ENCODE measurements at regions of chr15 and their contacts with region 1.

Region 1: DNA sequence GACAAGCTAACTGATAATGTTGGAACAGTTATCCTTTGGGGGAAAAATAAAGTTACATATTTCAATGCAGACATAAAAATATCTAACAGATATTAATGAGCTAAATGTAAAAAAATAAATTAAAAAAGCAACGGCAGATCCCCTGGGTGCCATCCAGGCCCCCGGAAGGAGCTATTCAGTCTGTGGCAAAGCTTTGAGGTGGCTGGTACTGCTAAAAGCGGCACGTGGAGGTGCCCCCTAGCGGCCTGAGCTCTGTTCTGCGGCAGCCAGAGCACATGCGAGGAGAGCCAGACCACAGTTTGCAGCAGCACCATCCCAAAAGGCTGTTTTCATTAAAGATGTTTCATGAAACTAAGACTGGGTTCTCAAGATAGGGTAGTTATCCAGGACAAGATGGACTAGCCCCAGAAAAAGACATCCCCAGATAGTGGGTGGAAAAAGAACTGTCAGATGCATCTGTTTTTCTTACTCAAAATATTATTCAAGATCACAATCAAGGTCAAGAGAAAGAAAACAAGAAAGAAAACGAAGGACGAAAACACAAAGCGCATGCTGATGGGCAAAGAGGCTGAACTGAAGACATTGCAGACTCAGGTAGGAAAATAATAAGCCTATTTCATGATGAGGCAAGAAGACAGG is 18.7 kb downstream of the AP3S2 start:
- DNase-seq: peak; percentile 72
- H3K4me3 Mint-ChIP-seq: no peak overlapping the region
- H3K27ac Mint-ChIP-seq: peak overlapping the region; percentile 46
- H3K4me1 Mint-ChIP-seq: no peaks in the 10 kb centered on the region
- H3K27me3 Mint-ChIP-seq: no peaks in the 10 kb centered on the region
- CTCF ChIP-seq: peak; percentile 84

Region 2: DNA sequence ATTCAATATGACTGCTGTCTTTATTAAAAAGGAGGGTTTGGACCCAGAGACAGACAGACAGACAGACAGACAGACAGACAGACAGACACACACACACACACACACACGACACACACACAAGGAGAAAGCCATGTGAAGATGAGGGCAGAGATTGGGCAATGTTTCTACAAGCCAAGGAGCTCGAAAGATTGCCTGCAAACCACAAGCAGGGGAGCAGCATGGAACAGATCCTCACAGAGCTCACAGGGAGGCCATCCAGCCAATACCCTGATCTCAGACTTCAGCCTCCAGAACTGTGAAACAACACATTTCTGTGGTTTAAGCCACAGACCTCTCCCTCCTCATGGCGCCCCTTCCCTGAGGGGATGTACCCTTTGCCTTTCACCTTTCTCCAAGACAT is 822.6 kb before region 1 on chr15:
- CTCF ChIA-PET with region 1: no interaction called
- POLR2A ChIA-PET with region 1: no interaction called
- intact Hi-C with region 1: no loop called
- DNase-seq: peak; percentile 47
- H3K4me3 Mint-ChIP-seq: no peak overlapping the region
- H3K27ac Mint-ChIP-seq: no peak overlapping the region
- H3K4me1 Mint-ChIP-seq: no peaks in the 10 kb centered on the region
- H3K27me3 Mint-ChIP-seq: no peaks in the 10 kb centered on the region
- CTCF ChIP-seq: no peak

Region 3: GRCh38 chr15:89740137-89740536 is 134.9 kb before region 1 on chr15:
- CTCF ChIA-PET with region 1: interaction called, 30 read pairs
- POLR2A ChIA-PET with region 1: interaction called, 3 read pairs
- intact Hi-C with region 1: loop called (anchors 1 kb)
- DNase-seq: peak; percentile 78
- H3K4me3 Mint-ChIP-seq: no peak overlapping the region
- H3K27ac Mint-ChIP-seq: no peak overlapping the region
- H3K4me1 Mint-ChIP-seq: no peaks in the 10 kb centered on the region
- H3K27me3 Mint-ChIP-seq: peaks cover 19% of the 10 kb centered on the region
- CTCF ChIP-seq: peak; percentile 89

Region 4: GRCh38 chr15:89768060-89768500 is 107.0 kb before region 1 on chr15:
- CTCF ChIA-PET with region 1: interaction called, 271 read pairs
- POLR2A ChIA-PET with region 1: interaction called, 3 read pairs
- intact Hi-C with region 1: no loop called
- DNase-seq: no peak
- H3K4me3 Mint-ChIP-seq: no peak overlapping the region
- H3K27ac Mint-ChIP-seq: no peak overlapping the region
- H3K4me1 Mint-ChIP-seq: no peaks in the 10 kb centered on the region
- H3K27me3 Mint-ChIP-seq: no peaks in the 10 kb centered on the region
- CTCF ChIP-seq: no peak

Region 5: DNA sequence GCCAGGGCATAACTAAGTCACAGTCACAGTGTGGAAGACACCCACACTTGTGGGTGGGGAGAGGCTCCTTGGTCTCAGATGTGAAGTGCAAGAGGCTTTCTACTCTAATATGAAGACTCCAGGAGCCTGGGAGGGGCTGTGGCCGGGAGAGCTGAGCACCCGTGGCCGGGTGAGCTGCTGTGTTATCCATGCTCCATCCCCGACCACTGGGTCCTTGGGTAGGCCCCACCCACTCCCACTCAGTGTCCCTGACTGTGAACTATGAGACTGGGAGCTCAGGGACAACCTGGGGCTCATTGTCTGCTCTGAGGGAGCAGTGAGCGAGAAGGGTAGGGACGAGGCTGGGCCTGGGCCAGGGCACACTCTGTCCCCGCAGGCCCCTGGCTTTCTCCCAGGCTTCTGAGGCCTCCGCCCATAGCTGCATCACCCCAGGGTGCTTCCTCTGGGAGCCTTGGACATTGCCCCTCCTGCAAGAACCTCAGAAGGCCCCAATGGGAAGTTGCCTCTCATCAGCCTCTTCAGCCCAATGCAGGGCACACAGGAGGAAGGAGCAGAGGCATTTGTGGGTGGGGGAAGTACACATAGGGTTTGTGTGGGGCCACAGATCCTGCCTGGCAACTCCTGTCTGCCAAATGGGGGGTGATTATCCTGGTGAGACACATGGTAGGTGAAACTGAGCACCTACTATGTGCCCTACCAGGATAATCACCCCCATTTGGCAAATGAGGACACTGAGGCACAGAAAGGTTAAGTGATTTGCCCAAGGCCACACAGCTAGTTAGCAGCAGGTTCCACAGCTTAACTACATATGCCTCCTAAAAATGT is 62.8 kb before region 1 on chr15:
- CTCF ChIA-PET with region 1: interaction called, 13 read pairs
- POLR2A ChIA-PET with region 1: interaction called, 4 read pairs
- intact Hi-C with region 1: loop called (anchors 2 kb)
- DNase-seq: peak; percentile 97
- H3K4me3 Mint-ChIP-seq: peak overlapping the region; percentile 89
- H3K27ac Mint-ChIP-seq: peak overlapping the region; percentile 88
- H3K4me1 Mint-ChIP-seq: peaks cover 33% of the 10 kb centered on the region
- H3K27me3 Mint-ChIP-seq: no peaks in the 10 kb centered on the region
- CTCF ChIP-seq: no peak

Region 6: GRCh38 chr15:89836255-89837133 is 38.6 kb before region 1 on chr15:
- CTCF ChIA-PET with region 1: interaction called, 20 read pairs
- POLR2A ChIA-PET with region 1: interaction called, 6 read pairs
- intact Hi-C with region 1: no loop called
- DNase-seq: peak; percentile 94
- H3K4me3 Mint-ChIP-seq: peak overlapping the region; percentile 63
- H3K27ac Mint-ChIP-seq: peak overlapping the region; percentile 98
- H3K4me1 Mint-ChIP-seq: peaks cover 35% of the 10 kb centered on the region
- H3K27me3 Mint-ChIP-seq: no peaks in the 10 kb centered on the region
- CTCF ChIP-seq: no peak

Region 7: DNA sequence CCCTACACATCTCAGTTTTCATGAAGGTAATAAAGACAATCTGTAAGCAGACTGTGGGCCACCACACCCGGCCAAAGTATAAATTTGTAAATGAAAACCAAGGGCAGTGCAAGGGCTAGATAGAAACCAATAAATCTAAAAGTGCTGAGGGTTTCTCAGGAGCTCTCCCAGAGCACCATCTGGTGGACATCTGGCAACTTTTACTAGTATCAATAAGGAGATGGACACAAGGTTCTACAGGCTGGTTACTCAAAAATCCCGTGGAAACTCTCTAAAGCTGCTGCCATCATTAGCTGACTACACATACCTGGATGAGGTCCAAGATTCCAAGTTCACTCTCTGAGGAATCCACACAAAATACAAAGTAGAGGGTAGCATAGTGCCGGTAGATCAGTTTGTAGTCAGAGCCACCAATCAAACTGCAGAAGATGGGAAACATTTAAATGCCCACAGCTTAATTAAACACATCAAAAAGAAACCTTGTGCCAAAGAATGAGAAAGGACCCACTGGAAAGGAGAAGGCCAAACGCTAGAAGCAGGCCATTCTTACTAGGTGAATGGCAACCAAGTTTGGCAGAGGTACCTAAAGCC is 13.3 kb after region 1 on chr15:
- CTCF ChIA-PET with region 1: interaction called, 88 read pairs
- POLR2A ChIA-PET with region 1: interaction called, 4 read pairs
- intact Hi-C with region 1: no loop called
- DNase-seq: peak; percentile 70
- H3K4me3 Mint-ChIP-seq: no peak overlapping the region
- H3K27ac Mint-ChIP-seq: no peak overlapping the region
- H3K4me1 Mint-ChIP-seq: no peaks in the 10 kb centered on the region
- H3K27me3 Mint-ChIP-seq: no peaks in the 10 kb centered on the region
- CTCF ChIP-seq: peak; percentile 51